ENCODE measurements at regions of chrX and their contacts with region 1.

Region 1: GRCh38 chrX:136880452-136881013 is at the start of gene RBMX:
- DNase-seq: peak; percentile 84
- ATAC-seq: peak; percentile 96
- H3K4me3 ChIP-seq: peak within 1 kb of the TSS; percentile 79 to 92 (median 87)
- H3K27ac ChIP-seq: peak within 1 kb of the TSS; percentile 89
- H3K4me1 ChIP-seq: peaks cover 10% of the 10 kb centered on the region; the same call in 1 of the 2 replicates
- H3K27me3 ChIP-seq: no peaks in the 10 kb centered on the region; a peak in 1 of 5 replicates
- CTCF ChIP-seq: no peak
- EP300 ChIP-seq: no peak
- POLR2A ChIP-seq: peak; percentile 97 to 99
- RAD21 ChIP-seq: no peak
- total RNA-seq, gene RBMX: 254 and 303 TPM in 2 replicates

Region 2: DNA sequence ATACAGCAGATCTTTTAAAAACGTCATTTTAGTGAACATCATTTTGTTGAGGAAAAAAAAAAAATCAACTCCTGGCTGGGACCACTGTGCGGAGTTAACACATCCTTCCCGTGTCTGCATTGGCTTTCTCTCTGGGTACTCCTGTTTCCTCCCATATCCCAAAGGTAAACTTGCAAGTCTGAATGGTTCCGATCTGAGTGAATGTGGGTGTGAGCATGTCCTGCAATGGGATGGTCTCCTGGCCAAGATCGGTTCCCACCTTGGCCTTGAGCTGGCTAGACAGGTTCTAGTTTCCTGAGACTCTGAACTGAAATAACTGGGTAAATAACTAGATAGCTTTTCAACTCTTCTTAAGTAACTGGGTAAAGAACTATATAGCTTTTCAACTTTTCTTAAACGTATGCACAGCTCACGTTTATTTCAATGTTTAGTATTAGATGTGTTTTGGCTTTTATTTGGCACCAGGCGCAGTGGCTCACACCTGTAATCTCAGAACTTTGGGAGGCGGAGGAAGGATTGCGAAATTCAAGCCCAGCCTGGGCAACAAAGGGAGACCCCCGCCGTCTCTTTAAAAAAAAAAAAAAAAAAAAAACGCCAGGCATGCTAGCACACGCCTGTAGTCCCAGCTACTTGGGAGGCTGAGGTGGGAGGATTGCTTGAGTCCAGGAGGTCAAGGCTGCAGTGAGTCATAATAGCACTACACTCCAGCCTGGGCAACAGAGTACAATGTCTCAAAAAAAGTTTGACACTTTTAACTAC is 14.0 kb before region 1 on chrX:
- CTCF ChIA-PET with region 1: no interaction called
- POLR2A ChIA-PET with region 1: interaction called, 24 read pairs
- in situ Hi-C with region 1: no loop called
- intact Hi-C with region 1: no loop called
- DNase-seq: peak; percentile 14
- ATAC-seq: peak; percentile 56
- H3K4me3 ChIP-seq: no peak overlapping the region
- H3K27ac ChIP-seq: no peak overlapping the region
- H3K4me1 ChIP-seq: peaks cover 33% of the 10 kb centered on the region
- H3K27me3 ChIP-seq: no peaks in the 10 kb centered on the region
- CTCF ChIP-seq: no peak
- EP300 ChIP-seq: no peak
- POLR2A ChIP-seq: no peak
- RAD21 ChIP-seq: no peak

Region 3: GRCh38 chrX:136909706-136910564 is 29.4 kb after region 1 on chrX:
- CTCF ChIA-PET with region 1: no interaction called
- POLR2A ChIA-PET with region 1: interaction called, 7 read pairs
- in situ Hi-C with region 1: no loop called
- intact Hi-C with region 1: loop called (anchors 2 kb)
- DNase-seq: no peak
- ATAC-seq: peak; percentile 55
- H3K4me3 ChIP-seq: peak overlapping the region; percentile 60 to 73 (median 63)
- H3K27ac ChIP-seq: no peak overlapping the region
- H3K4me1 ChIP-seq: no peaks in the 10 kb centered on the region
- H3K27me3 ChIP-seq: no peaks in the 10 kb centered on the region
- CTCF ChIP-seq: no peak
- EP300 ChIP-seq: no peak
- POLR2A ChIP-seq: no peak
- RAD21 ChIP-seq: no peak

Region 4: DNA sequence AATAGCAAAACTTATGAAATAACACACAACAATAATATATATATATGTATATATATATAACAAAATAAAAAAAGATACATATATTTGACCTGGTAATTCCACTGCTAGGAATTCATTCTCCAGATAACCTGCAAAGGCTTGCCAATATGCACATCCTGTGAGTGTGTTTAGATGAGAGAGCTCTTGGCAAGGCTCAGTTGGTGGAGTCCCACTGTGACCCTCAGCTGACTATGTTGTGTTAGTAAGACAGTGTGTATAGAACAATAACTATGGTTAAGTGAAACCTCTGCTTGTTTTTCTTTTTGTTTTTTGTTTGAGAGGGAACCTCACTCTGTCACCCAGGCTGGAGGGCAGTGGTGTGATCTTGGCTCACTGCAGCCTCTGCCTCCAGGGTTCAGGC is 39.5 kb after region 1 on chrX:
- CTCF ChIA-PET with region 1: no interaction called
- POLR2A ChIA-PET with region 1: interaction called, 11 read pairs
- in situ Hi-C with region 1: no loop called
- intact Hi-C with region 1: no loop called
- DNase-seq: no peak
- ATAC-seq: no peak
- H3K4me3 ChIP-seq: no peak overlapping the region
- H3K27ac ChIP-seq: no peak overlapping the region
- H3K4me1 ChIP-seq: 0 out of 2 replicates have a peak, but pooled peaks cover 2% of the 10 kb centered on the region
- H3K27me3 ChIP-seq: no peaks in the 10 kb centered on the region
- CTCF ChIP-seq: no peak
- EP300 ChIP-seq: no peak
- POLR2A ChIP-seq: no peak
- RAD21 ChIP-seq: no peak

Measured in HepG2 (cell line).